HEK293 (cell line): ENCODE measurements at regions of chr2 and their contacts with region 1.

Region 1: GRCh38 chr2:44479122-44479887 is 117.6 kb downstream of the CAMKMT start:
- H3K4me3 ChIP-seq: no peak overlapping the region
- H3K27ac ChIP-seq: no peak overlapping the region
- H3K4me1 ChIP-seq: no peaks in the 10 kb centered on the region
- CTCF ChIP-seq: peak; percentile 97

Region 2: GRCh38 chr2:44044281-44044720 is 435.0 kb before region 1 on chr2:
- CTCF ChIA-PET with region 1: interaction called, 19 read pairs
- POLR2A ChIA-PET with region 1: no interaction called
- H3K4me3 ChIP-seq: no peak overlapping the region
- H3K27ac ChIP-seq: no peak overlapping the region
- H3K4me1 ChIP-seq: no peaks in the 10 kb centered on the region
- CTCF ChIP-seq: peak; percentile 95

Region 3: GRCh38 chr2:44061876-44062275 is 417.4 kb before region 1 on chr2:
- CTCF ChIA-PET with region 1: no interaction called
- POLR2A ChIA-PET with region 1: no interaction called
- H3K4me3 ChIP-seq: no peak overlapping the region
- H3K27ac ChIP-seq: no peak overlapping the region
- H3K4me1 ChIP-seq: no peaks in the 10 kb centered on the region
- CTCF ChIP-seq: no peak

Region 4: GRCh38 chr2:44201648-44202165 is 277.6 kb before region 1 on chr2:
- CTCF ChIA-PET with region 1: no interaction called
- POLR2A ChIA-PET with region 1: no interaction called
- H3K4me3 ChIP-seq: no peak overlapping the region
- H3K27ac ChIP-seq: no peak overlapping the region
- H3K4me1 ChIP-seq: peaks cover 21% of the 10 kb centered on the region
- CTCF ChIP-seq: no peak

Region 5: DNA sequence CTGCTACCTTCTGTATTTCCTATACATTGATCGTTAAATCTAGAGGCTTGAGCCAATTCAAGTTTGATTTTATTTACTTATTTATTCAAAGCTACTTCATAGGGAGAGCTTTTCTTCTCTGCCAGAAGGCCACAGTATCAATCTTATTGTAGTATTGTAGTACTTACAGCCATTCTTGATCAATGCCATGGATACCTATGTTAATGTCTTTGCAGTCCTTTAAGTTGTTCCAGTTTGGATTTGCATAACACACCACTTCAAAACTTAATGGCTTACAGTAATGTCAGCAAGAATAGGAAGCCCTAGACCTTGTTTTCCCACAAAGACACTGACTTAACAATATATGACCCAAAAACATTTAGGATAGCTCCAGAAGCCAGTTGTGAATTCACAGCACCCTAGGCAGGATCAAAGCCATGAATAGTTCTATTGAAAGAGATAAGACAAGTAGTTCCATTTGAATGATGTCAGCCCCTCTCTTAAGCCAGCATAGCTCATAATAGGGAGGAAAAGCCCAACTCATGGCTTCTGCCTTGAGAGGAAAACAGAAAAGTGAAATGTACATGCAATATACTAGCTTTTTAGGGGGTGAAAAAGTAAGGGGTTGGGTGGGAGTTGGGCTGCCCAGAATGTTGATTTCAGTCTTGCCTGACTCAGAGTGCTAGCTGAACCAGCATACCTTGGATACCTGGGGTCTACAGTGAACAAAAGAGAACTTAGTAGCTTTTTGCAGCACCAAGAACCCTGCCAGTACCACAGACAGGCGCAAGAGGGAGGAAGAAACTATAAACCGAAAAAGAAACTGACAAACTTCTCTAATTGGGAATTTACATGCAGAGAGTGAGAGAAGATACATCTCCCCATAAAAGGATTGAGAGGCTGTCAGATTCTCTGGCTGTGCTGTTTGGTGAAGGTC is 16.1 kb before region 1 on chr2:
- CTCF ChIA-PET with region 1: interaction called, 36 read pairs
- POLR2A ChIA-PET with region 1: no interaction called
- H3K4me3 ChIP-seq: no peak overlapping the region
- H3K27ac ChIP-seq: no peak overlapping the region
- H3K4me1 ChIP-seq: no peaks in the 10 kb centered on the region
- CTCF ChIP-seq: no peak

Region 6: GRCh38 chr2:44515416-44515815 is 36.1 kb after region 1 on chr2:
- CTCF ChIA-PET with region 1: interaction called, 11 read pairs
- POLR2A ChIA-PET with region 1: no interaction called
- H3K4me3 ChIP-seq: no peak overlapping the region
- H3K27ac ChIP-seq: no peak overlapping the region
- H3K4me1 ChIP-seq: 0 out of 2 replicates have a peak, but pooled peaks cover 2% of the 10 kb centered on the region
- CTCF ChIP-seq: no peak

Region 7: GRCh38 chr2:44578421-44579135 is 99.3 kb after region 1 on chr2:
- CTCF ChIA-PET with region 1: no interaction called
- POLR2A ChIA-PET with region 1: no interaction called
- H3K4me3 ChIP-seq: no peak overlapping the region
- H3K27ac ChIP-seq: no peak overlapping the region
- H3K4me1 ChIP-seq: peaks cover 9% of the 10 kb centered on the region
- CTCF ChIP-seq: no peak

Region 8: GRCh38 chr2:44715671-44716081 is 236.4 kb after region 1 on chr2:
- CTCF ChIA-PET with region 1: interaction called, 10 read pairs
- POLR2A ChIA-PET with region 1: no interaction called
- H3K4me3 ChIP-seq: no peak overlapping the region
- H3K27ac ChIP-seq: no peak overlapping the region
- H3K4me1 ChIP-seq: no peaks in the 10 kb centered on the region
- CTCF ChIP-seq: no peak

Region 9: GRCh38 chr2:44810892-44811530 is 331.7 kb after region 1 on chr2:
- CTCF ChIA-PET with region 1: no interaction called
- POLR2A ChIA-PET with region 1: no interaction called
- H3K4me3 ChIP-seq: no peak overlapping the region
- H3K27ac ChIP-seq: no peak overlapping the region
- H3K4me1 ChIP-seq: no peaks in the 10 kb centered on the region
- CTCF ChIP-seq: no peak

Region 10: GRCh38 chr2:44974064-44974715 is 494.9 kb after region 1 on chr2:
- CTCF ChIA-PET with region 1: interaction called, 16 read pairs
- POLR2A ChIA-PET with region 1: no interaction called
- H3K4me3 ChIP-seq: no peak overlapping the region
- H3K27ac ChIP-seq: no peak overlapping the region
- H3K4me1 ChIP-seq: no peaks in the 10 kb centered on the region
- CTCF ChIP-seq: 0 out of 2 replicates have a peak, but pooled peaks have one; percentile 12